GM10248 (cell line): ENCODE measurements at regions of chr5 and their contacts with region 1.

Region 1: GRCh38 chr5:57513785-57514184 is 31.2 kb upstream of the ACTBL2 start:
- DNase-seq: no peak
- CTCF ChIP-seq: no peak

Region 2: DNA sequence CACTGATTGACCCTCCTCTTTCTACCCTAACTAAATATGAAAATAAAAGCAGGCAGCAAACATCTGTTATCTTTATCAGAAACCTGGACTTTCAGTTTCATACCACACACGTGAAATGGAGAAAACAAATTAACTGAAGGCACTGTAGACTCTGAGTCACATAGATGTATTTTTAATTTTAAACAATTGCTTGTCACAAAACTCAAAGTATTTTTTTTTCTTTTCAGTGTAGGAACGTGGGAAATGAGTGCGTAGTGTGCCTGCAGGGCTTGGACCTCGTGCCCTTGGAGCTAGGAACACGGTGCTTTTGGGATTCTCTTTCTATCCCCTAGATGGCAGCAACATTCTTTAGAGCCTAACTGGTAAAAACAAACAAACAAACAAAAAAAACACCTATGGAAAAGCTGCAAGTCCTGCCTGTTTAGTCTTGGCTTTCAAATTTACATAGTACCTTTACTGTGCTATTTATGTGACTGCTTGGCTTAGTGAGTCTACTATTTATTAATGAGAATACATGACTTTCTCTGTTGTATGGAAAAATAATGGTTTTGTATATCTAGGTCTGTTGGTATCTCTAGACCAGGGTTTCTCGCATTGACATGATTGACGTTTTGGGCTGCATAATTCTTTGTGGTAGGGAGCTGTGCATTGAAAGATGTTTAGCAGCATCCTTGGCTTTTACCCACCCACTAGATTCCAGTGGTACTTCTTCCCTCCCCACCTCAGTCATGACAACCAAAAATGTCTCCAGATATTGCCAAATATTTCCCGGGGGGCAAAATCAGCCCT is 14.3 kb before region 1 on chr5:
- CTCF ChIA-PET with region 1: interaction called, 32 read pairs
- POLR2A ChIA-PET with region 1: no interaction called
- DNase-seq: peak; percentile 41
- CTCF ChIP-seq: peak; percentile 58